ENCODE measurements at regions of chr2 and their contacts with region 1.

Region 1: DNA sequence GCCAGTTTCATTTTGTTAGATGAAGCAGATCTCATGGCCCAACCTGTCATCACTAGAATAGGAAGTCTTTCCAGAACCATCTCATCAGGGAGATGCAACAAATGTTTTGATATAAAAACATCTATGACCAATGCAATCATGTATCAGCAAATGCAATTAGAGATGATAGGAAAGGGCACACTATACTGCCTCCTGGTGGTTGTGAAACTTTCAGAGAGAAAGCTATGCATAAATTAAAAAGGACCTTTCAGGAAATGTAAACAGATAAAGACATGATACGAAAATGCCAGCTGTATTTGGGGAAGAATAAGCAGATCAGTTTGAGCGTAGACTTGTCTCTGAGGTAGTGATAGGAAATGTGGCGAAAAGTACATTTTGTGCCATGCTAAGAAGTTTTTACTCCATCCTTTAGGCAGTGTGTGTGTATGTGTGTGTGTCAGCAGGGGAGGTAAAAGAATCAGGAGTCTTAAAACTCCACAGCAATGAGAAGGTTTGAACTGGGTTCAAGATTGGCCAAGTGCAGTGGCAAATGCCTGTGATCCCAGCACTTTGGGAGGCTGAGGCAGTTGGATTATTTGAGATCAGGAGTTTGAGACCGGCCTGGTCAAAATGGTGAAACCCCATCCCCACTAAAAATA is 479.3 kb downstream of the CPS1 start:
- DNase-seq: peak in 1 of 2 donors; percentile 5
- ATAC-seq: no peak
- H3K4me3 ChIP-seq: no peak overlapping the region
- H3K27ac ChIP-seq: no peak overlapping the region
- H3K4me1 ChIP-seq: no peaks in the 10 kb centered on the region
- H3K27me3 ChIP-seq: no peaks in the 10 kb centered on the region
- CTCF ChIP-seq: peak in 7 of 9 donors; percentile 40 to 68 (median 55)

Region 2: GRCh38 chr2:210617732-210618330 is 417.8 kb before region 1 on chr2:
- intact Hi-C with region 1: loop called in 1 of 10 experiments (anchors 2 kb)
- DNase-seq: peak in 1 of 2 donors; percentile 6
- ATAC-seq: no peak
- H3K4me3 ChIP-seq: no peak overlapping the region
- H3K27ac ChIP-seq: no peak overlapping the region
- H3K4me1 ChIP-seq: no peaks in the 10 kb centered on the region
- H3K27me3 ChIP-seq: no peaks in the 10 kb centered on the region
- CTCF ChIP-seq: peak in 7 of 9 donors; percentile 35 to 67 (median 57)

Region 3: GRCh38 chr2:210663631-210664089 is 372.0 kb before region 1 on chr2:
- intact Hi-C with region 1: loop called in 8 of 10 experiments (anchors 5 kb)
- DNase-seq: peak in 1 of 2 donors; percentile 5
- ATAC-seq: peak in 2 of 8 donors; percentile 30 to 73
- H3K4me3 ChIP-seq: no peak overlapping the region
- H3K27ac ChIP-seq: no peak overlapping the region
- H3K4me1 ChIP-seq: no peaks in the 10 kb centered on the region
- H3K27me3 ChIP-seq: no peaks in the 10 kb centered on the region
- CTCF ChIP-seq: peak in 7 of 9 donors; percentile 29 to 63 (median 42)

Region 4: DNA sequence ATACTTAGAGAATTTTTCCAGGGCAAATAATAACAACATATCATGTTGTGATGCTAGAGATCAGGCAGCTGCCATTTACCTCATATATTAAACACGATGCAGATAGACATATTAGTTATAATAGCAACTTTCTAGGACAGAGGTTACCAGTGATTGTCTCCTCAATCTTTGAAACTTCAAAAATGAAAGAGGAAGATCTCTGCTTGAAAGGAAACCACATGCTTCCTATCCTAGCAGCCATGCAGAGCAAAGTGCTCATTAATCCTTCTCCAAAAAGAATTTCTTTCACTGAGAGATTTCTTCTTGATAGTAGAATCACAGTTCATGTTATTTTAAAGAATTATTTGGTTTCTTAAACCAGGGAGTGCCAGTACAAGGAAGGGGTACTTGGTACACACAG is 162.0 kb before region 1 on chr2:
- intact Hi-C with region 1: no loop called
- DNase-seq: no peak
- ATAC-seq: no peak
- H3K4me3 ChIP-seq: no peak overlapping the region
- H3K27ac ChIP-seq: no peak overlapping the region
- H3K4me1 ChIP-seq: no peaks in the 10 kb centered on the region
- H3K27me3 ChIP-seq: no peaks in the 10 kb centered on the region
- CTCF ChIP-seq: no peak